CD8-positive, alpha-beta T cell (primary cell): ENCODE measurements at regions of chr1 and their contacts with region 1.

Region 1: GRCh38 chr1:151198255-151199127 is at the start of gene PIP5K1A:
- DNase-seq: peak; percentile 96 to 100 (median 99)
- ATAC-seq: peak; percentile 94
- H3K4me3 ChIP-seq: peak within 1 kb of the TSS; percentile 88 to 91
- H3K4me3 Mint-ChIP-seq: peak within 1 kb of the TSS; percentile 97
- H3K27ac ChIP-seq: peak within 1 kb of the TSS; percentile 78 to 86
- H3K27ac Mint-ChIP-seq: peak within 1 kb of the TSS; percentile 92
- H3K4me1 ChIP-seq: peaks cover 28% of the 10 kb centered on the region
- H3K4me1 Mint-ChIP-seq: peaks cover 45% of the 10 kb centered on the region
- H3K27me3 ChIP-seq: no peaks in the 10 kb centered on the region
- H3K27me3 Mint-ChIP-seq: no peaks in the 10 kb centered on the region
- CTCF ChIP-seq: no peak
- total RNA-seq, gene PIP5K1A: 37.2 to 48.2 TPM

Region 2: DNA sequence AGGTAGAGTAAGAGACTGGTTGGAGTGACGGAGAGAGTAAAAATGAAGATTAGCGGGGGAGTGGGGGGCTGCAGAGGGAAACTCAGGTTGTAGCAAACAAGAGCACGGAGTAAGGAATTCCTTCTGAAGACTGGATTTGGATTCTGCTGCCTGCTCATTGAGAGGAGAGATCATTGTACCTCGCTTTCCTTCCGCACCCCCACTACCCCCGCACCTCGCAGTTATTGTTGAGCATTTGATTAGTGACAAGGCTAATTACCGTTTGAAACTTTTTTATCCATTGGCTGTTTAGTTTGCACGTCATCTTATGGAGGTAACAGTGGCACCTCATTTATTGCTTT is 876.7 kb before region 1 on chr1:
- CTCF ChIA-PET with region 1: no interaction called
- POLR2A ChIA-PET with region 1: no interaction called
- intact Hi-C with region 1: loop called in 1 of 2 experiments (anchors 5 kb)
- DNase-seq: peak in 2 of 9 experiments; percentile 24 to 26
- ATAC-seq: peak; percentile 24
- H3K4me3 ChIP-seq: peak overlapping the region; percentile 87 to 96
- H3K4me3 Mint-ChIP-seq: peak overlapping the region; percentile 99
- H3K27ac ChIP-seq: peak overlapping the region; percentile 92 to 93
- H3K27ac Mint-ChIP-seq: peak overlapping the region; percentile 99
- H3K4me1 ChIP-seq: peaks cover 19% of the 10 kb centered on the region
- H3K4me1 Mint-ChIP-seq: peaks cover 50% of the 10 kb centered on the region
- H3K27me3 ChIP-seq: no peaks in the 10 kb centered on the region
- H3K27me3 Mint-ChIP-seq: no peaks in the 10 kb centered on the region
- CTCF ChIP-seq: no peak

Region 3: GRCh38 chr1:151165738-151166505 is 32.6 kb before region 1 on chr1 and contains the starts of genes LYSMD1 and SCNM1:
- CTCF ChIA-PET with region 1: no interaction called
- POLR2A ChIA-PET with region 1: no interaction called
- intact Hi-C with region 1: loop called (anchors 2 kb)
- DNase-seq: peak; percentile 91 to 99 (median 95)
- ATAC-seq: peak; percentile 96
- H3K4me3 ChIP-seq: peak within 1 kb of the TSS; percentile 82 to 94
- H3K4me3 Mint-ChIP-seq: peak within 1 kb of the TSS; percentile 95
- H3K27ac ChIP-seq: peak within 1 kb of the TSS; percentile 72 to 77
- H3K27ac Mint-ChIP-seq: peak within 1 kb of the TSS; percentile 94
- H3K4me1 ChIP-seq: peaks cover 29% of the 10 kb centered on the region
- H3K4me1 Mint-ChIP-seq: peaks cover 50% of the 10 kb centered on the region
- H3K27me3 ChIP-seq: no peaks in the 10 kb centered on the region
- H3K27me3 Mint-ChIP-seq: no peaks in the 10 kb centered on the region
- CTCF ChIP-seq: no peak
- total RNA-seq, gene LYSMD1: 0.49 to 0.94 TPM
- total RNA-seq, gene SCNM1: 35.0 to 40.4 TPM

Region 4: GRCh38 chr1:151281969-151282882 is 83.7 kb after region 1 on chr1 and contains the start of gene ZNF687:
- CTCF ChIA-PET with region 1: no interaction called
- POLR2A ChIA-PET with region 1: interaction called, 3 read pairs
- intact Hi-C with region 1: loop called (anchors 1 kb)
- DNase-seq: peak; percentile 95 to 100 (median 98)
- ATAC-seq: peak; percentile 84
- H3K4me3 ChIP-seq: peak within 1 kb of the TSS; percentile 72 to 89
- H3K4me3 Mint-ChIP-seq: peak within 1 kb of the TSS; percentile 99
- H3K27ac ChIP-seq: peak within 1 kb of the TSS; percentile 91 to 94
- H3K27ac Mint-ChIP-seq: peak within 1 kb of the TSS; percentile 98
- H3K4me1 ChIP-seq: peaks cover 21% of the 10 kb centered on the region
- H3K4me1 Mint-ChIP-seq: peaks cover 28% of the 10 kb centered on the region
- H3K27me3 ChIP-seq: no peaks in the 10 kb centered on the region
- H3K27me3 Mint-ChIP-seq: no peaks in the 10 kb centered on the region
- CTCF ChIP-seq: no peak
- total RNA-seq, gene ZNF687: 34.0 to 36.3 TPM

Region 5: GRCh38 chr1:151340870-151341754 is 142.6 kb after region 1 on chr1:
- CTCF ChIA-PET with region 1: interaction called, 8 read pairs
- POLR2A ChIA-PET with region 1: interaction called, 4 read pairs
- intact Hi-C with region 1: loop called (anchors 1 to 2 kb)
- DNase-seq: peak in 8 of 9 experiments; percentile 24 to 86 (median 54)
- ATAC-seq: peak; percentile 92
- H3K4me3 ChIP-seq: no peak overlapping the region
- H3K4me3 Mint-ChIP-seq: no peak overlapping the region
- H3K27ac ChIP-seq: peak overlapping the region in 1 of 2 experiments; percentile 42
- H3K27ac Mint-ChIP-seq: peak overlapping the region; percentile 50
- H3K4me1 ChIP-seq: peaks cover 6% of the 10 kb centered on the region
- H3K4me1 Mint-ChIP-seq: peaks cover 26% of the 10 kb centered on the region
- H3K27me3 ChIP-seq: no peaks in the 10 kb centered on the region
- H3K27me3 Mint-ChIP-seq: no peaks in the 10 kb centered on the region
- CTCF ChIP-seq: peak; percentile 81

Region 6: GRCh38 chr1:151459331-151460046 is 261.0 kb after region 1 on chr1 and contains the start of gene POGZ:
- CTCF ChIA-PET with region 1: no interaction called
- POLR2A ChIA-PET with region 1: no interaction called
- intact Hi-C with region 1: loop called in 1 of 2 experiments (anchors 5 kb)
- DNase-seq: peak; percentile 89 to 97 (median 95)
- ATAC-seq: peak; percentile 69
- H3K4me3 ChIP-seq: peak within 1 kb of the TSS; percentile 75 to 79
- H3K4me3 Mint-ChIP-seq: peak within 1 kb of the TSS; percentile 89
- H3K27ac ChIP-seq: peak within 1 kb of the TSS; percentile 73 to 88
- H3K27ac Mint-ChIP-seq: peak within 1 kb of the TSS; percentile 93
- H3K4me1 ChIP-seq: peaks cover 18% of the 10 kb centered on the region
- H3K4me1 Mint-ChIP-seq: peaks cover 29% of the 10 kb centered on the region
- H3K27me3 ChIP-seq: peaks cover 0 to 1% of the 10 kb centered on the region in 2 experiments
- H3K27me3 Mint-ChIP-seq: peaks cover 24% of the 10 kb centered on the region
- CTCF ChIP-seq: no peak
- total RNA-seq, gene POGZ: 85.4 to 88.0 TPM

Region 7: DNA sequence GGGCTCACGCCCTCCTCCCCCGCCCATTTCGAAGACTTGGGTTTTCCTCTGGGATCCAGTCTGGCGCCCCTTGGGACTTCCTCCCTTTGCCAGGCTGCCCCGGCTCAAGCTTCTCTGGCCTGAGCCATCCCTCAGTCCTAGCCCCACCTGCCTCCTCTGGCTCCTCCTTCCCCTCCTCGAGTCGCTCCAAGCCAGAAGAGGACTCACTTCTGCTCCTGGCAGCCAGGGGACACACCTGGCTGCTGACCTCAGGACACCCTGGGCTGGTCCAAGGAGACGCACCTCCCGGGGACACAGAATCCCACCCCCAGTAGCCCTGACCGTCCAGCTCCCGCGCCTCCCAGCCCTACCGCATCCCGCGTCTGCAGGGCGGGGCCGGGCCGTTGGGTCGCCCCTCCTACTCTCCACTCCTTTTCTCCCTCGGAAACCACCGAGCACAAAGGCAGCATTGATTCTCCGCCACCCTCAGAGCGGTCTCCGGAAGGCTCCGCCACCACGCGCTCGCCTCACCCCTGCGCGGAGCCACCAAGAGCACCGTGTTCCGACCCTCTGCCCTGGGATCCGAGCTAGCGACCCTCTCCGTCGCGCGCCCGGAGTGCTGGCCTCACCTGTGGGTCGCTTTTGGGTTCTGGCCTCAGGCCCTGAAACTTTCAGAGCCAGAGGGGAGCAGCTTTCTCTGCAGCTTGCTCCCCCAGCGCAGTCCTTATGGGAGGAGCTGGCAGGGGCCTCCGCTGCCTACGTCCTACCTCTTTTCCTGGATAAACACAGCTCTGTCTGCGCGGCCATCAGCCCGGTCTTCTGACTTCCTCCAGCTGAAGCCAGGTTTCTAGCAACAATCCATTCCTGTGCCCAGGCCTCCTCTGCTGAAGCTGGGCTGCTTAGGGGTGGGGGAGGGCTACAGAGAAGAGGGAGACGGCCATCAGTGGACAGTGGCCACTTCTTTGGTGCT is 641.2 kb after region 1 on chr1 and contains the start of gene C2CD4D:
- CTCF ChIA-PET with region 1: no interaction called
- POLR2A ChIA-PET with region 1: no interaction called
- intact Hi-C with region 1: loop called in 1 of 2 experiments (anchors 5 kb)
- DNase-seq: peak; percentile 43 to 89 (median 67)
- ATAC-seq: peak; percentile 72
- H3K4me3 ChIP-seq: peak within 1 kb of the TSS; percentile 52
- H3K4me3 Mint-ChIP-seq: peak within 1 kb of the TSS; percentile 85
- H3K27ac ChIP-seq: peak within 1 kb of the TSS in 1 of 2 experiments; percentile 66
- H3K27ac Mint-ChIP-seq: peak within 1 kb of the TSS; percentile 88
- H3K4me1 ChIP-seq: peaks cover 37% of the 10 kb centered on the region
- H3K4me1 Mint-ChIP-seq: peaks cover 47% of the 10 kb centered on the region
- H3K27me3 ChIP-seq: peaks cover 0 to 3% of the 10 kb centered on the region in 2 experiments
- H3K27me3 Mint-ChIP-seq: no peaks in the 10 kb centered on the region
- CTCF ChIP-seq: no peak
- total RNA-seq, gene C2CD4D: 0.44 to 0.65 TPM